ENCODE measurements at regions of chr12 and their contacts with region 1.

Region 1: GRCh38 chr12:49515266-49515665 is 23.6 kb upstream of the KCNH3 start:
- DNase-seq: no peak
- ATAC-seq: no peak
- H3K4me3 ChIP-seq: no peak overlapping the region
- H3K4me3 Mint-ChIP-seq: no peak overlapping the region
- H3K27ac ChIP-seq: no peak overlapping the region
- H3K27ac Mint-ChIP-seq: no peak overlapping the region
- H3K4me1 ChIP-seq: no peaks in the 10 kb centered on the region
- H3K4me1 Mint-ChIP-seq: no peaks in the 10 kb centered on the region
- H3K27me3 ChIP-seq: no peaks in the 10 kb centered on the region
- H3K27me3 Mint-ChIP-seq: no peaks in the 10 kb centered on the region
- CTCF ChIP-seq: no peak

Region 2: DNA sequence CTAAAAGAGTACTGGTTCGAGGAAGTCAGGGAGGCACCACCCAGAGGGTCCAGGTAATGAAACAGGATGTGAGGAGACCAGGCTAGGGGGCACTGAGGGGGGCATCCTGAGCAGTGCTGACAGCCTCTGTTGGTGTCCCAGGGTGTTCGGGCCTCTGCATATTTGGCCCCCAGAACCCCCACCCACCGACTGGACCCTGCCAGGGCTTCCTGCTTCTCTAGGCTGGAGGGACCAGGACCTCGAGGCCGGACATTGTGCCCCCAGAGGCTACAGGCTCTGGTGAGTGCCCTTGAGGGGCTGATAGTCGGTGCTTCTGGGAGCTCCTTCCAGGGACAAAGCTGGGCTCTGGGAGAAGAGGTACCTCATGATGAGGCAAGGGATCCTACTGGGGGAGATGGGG is 189.7 kb before region 1 on chr12:
- CTCF ChIA-PET with region 1: no interaction called
- POLR2A ChIA-PET with region 1: no interaction called
- intact Hi-C with region 1: no loop called
- DNase-seq: no peak
- ATAC-seq: no peak
- H3K4me3 ChIP-seq: no peak overlapping the region
- H3K4me3 Mint-ChIP-seq: no peak overlapping the region
- H3K27ac ChIP-seq: no peak overlapping the region
- H3K27ac Mint-ChIP-seq: no peak overlapping the region
- H3K4me1 ChIP-seq: peaks cover 12% of the 10 kb centered on the region
- H3K4me1 Mint-ChIP-seq: peaks cover 20% of the 10 kb centered on the region
- H3K27me3 ChIP-seq: no peaks in the 10 kb centered on the region
- H3K27me3 Mint-ChIP-seq: no peaks in the 10 kb centered on the region
- CTCF ChIP-seq: no peak

Region 3: DNA sequence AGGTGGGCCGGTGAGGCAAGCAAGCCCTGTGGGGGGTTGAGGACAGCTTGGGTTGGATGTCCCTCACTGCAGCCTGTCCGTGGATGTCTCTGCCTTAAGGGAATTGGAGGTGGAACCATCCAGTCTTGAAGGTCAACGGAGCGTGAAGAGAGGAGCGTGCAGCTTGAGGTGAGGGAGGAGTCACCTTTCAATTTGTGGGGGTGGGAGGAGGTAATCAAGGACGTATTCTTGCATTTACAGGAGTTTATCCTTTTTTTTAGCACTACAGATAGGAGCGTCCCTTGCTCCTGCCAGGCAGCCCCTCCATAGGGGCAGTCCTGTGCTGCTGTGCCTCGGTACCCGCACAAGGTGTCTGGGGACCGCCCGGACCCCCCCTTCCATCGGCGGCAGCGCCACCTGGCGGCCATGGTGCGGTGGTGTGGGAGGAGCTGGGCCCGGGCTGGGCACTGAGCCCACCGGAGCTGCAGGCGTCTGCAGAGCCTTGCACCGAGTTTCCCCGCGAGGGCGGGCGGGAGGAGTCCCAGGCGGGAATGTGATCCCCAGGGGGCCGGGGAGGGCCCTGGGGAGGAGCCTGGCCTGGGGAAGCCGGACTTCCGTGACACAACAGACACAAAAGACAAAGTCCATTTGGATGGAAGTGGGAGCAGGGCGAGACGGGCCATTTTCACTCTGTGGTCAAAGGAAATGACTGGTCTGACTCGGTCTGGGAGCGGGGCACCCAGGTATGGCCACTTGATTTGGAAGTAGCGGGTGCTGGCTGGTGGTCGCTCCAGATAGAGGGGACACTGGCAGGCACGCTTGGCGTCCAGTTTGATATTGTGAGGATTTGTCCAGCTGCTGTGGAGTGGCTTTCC is 167.7 kb before region 1 on chr12:
- CTCF ChIA-PET with region 1: interaction called, 380 read pairs
- POLR2A ChIA-PET with region 1: no interaction called
- intact Hi-C with region 1: no loop called
- DNase-seq: peak; percentile 68 to 91 (median 81)
- ATAC-seq: peak; percentile 78
- H3K4me3 ChIP-seq: peak overlapping the region; percentile 47 to 54
- H3K4me3 Mint-ChIP-seq: peak overlapping the region; percentile 79
- H3K27ac ChIP-seq: no peak overlapping the region
- H3K27ac Mint-ChIP-seq: no peak overlapping the region
- H3K4me1 ChIP-seq: peaks cover 45% of the 10 kb centered on the region
- H3K4me1 Mint-ChIP-seq: peaks cover 40% of the 10 kb centered on the region
- H3K27me3 ChIP-seq: peaks cover 33 to 45% of the 10 kb centered on the region in 2 experiments
- H3K27me3 Mint-ChIP-seq: peaks cover 57% of the 10 kb centered on the region
- CTCF ChIP-seq: peak; percentile 97

Region 4: DNA sequence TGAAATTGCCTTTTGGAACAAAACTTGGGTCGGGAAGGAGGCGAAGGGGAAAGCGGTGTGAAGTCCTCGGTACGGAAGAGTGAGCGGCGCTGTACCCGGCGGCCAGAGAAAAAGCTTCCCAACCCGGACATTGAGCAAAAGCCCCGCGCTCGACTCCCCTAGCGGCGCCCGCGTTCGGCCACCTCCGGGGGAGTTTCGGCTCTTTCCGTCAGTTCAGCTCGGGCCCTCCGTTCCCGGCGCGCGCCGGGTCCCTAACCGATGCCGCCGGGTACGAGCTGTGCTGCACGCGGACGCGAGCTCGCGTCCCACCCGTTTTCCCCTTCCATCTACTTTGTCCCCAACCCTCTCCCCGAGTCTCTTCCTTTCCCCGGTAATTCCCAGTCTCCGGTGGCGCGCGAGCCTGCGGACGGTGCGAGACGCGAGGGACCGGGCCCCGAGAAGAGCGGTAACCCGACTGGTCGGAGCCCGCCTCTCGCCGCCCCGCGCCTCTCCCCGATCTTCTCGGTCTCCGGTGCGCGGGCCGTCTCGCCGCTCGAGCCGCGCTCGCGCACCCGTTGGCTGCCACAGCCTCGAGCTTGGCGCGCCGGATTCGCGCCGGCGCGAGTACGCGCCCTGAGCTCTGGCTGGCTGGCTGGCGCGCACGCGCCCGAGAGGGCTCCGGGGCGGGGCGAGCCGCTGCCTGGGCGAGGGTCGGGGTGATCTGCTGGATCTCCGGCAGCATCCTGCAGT is 148.4 kb before region 1 on chr12:
- CTCF ChIA-PET with region 1: interaction called, 380 read pairs
- POLR2A ChIA-PET with region 1: no interaction called
- intact Hi-C with region 1: no loop called
- DNase-seq: peak; percentile 74 to 91 (median 84)
- ATAC-seq: peak; percentile 83
- H3K4me3 ChIP-seq: peak overlapping the region; percentile 91 to 100
- H3K4me3 Mint-ChIP-seq: peak overlapping the region; percentile 96
- H3K27ac ChIP-seq: peak overlapping the region; percentile 79 to 85
- H3K27ac Mint-ChIP-seq: peak overlapping the region; percentile 91
- H3K4me1 ChIP-seq: peaks cover 16% of the 10 kb centered on the region
- H3K4me1 Mint-ChIP-seq: peaks cover 31% of the 10 kb centered on the region
- H3K27me3 ChIP-seq: no peaks in the 10 kb centered on the region
- H3K27me3 Mint-ChIP-seq: no peaks in the 10 kb centered on the region
- CTCF ChIP-seq: no peak

Region 5: DNA sequence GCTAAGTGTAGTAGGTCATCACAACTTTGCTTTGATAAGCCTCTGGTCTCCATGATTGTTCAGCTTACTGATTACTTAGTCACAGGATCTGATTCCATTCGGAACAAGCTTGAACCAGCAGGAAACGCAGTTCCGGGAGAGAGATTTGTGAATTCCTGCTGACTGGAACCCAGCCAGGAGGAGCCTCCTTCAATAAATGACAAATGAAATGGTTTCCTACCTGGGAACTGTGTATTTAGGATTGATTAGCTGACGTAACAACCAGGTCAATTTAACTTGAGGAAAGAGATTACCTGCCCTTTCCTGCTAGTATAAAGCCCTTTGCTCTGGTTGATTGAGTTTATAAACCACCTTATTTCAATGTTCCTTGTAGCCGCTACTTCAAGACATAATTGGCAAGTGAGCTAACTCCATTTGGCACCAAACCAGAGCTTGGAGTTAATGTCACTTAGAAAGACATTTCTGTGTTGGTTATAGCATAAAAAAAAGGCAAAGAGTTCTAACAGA is 11.5 kb before region 1 on chr12:
- CTCF ChIA-PET with region 1: interaction called, 16 read pairs
- POLR2A ChIA-PET with region 1: no interaction called
- intact Hi-C with region 1: no loop called
- DNase-seq: no peak
- ATAC-seq: no peak
- H3K4me3 ChIP-seq: no peak overlapping the region
- H3K4me3 Mint-ChIP-seq: no peak overlapping the region
- H3K27ac ChIP-seq: no peak overlapping the region
- H3K27ac Mint-ChIP-seq: no peak overlapping the region
- H3K4me1 ChIP-seq: peaks cover 8% of the 10 kb centered on the region
- H3K4me1 Mint-ChIP-seq: peaks cover 17% of the 10 kb centered on the region
- H3K27me3 ChIP-seq: no peaks in the 10 kb centered on the region
- H3K27me3 Mint-ChIP-seq: no peaks in the 10 kb centered on the region
- CTCF ChIP-seq: no peak

Region 6: GRCh38 chr12:49553512-49554088 is 38.3 kb after region 1 on chr12:
- CTCF ChIA-PET with region 1: interaction called, 19 read pairs
- POLR2A ChIA-PET with region 1: no interaction called
- intact Hi-C with region 1: no loop called
- DNase-seq: peak in 2 of 9 experiments; percentile 60 to 70
- ATAC-seq: peak; percentile 68
- H3K4me3 ChIP-seq: no peak overlapping the region
- H3K4me3 Mint-ChIP-seq: no peak overlapping the region
- H3K27ac ChIP-seq: no peak overlapping the region
- H3K27ac Mint-ChIP-seq: peak overlapping the region; percentile 7
- H3K4me1 ChIP-seq: peaks cover 10% of the 10 kb centered on the region
- H3K4me1 Mint-ChIP-seq: peaks cover 23% of the 10 kb centered on the region
- H3K27me3 ChIP-seq: peaks cover 0 to 4% of the 10 kb centered on the region in 2 experiments
- H3K27me3 Mint-ChIP-seq: no peaks in the 10 kb centered on the region
- CTCF ChIP-seq: peak; percentile 53

Region 7: GRCh38 chr12:49580572-49581535 is 65.6 kb after region 1 on chr12:
- CTCF ChIA-PET with region 1: interaction called, 17 read pairs
- POLR2A ChIA-PET with region 1: no interaction called
- intact Hi-C with region 1: no loop called
- DNase-seq: peak in 8 of 9 experiments; percentile 43 to 69 (median 61)
- ATAC-seq: peak; percentile 86
- H3K4me3 ChIP-seq: no peak overlapping the region
- H3K4me3 Mint-ChIP-seq: no peak overlapping the region
- H3K27ac ChIP-seq: no peak overlapping the region
- H3K27ac Mint-ChIP-seq: no peak overlapping the region
- H3K4me1 ChIP-seq: no peaks in the 10 kb centered on the region
- H3K4me1 Mint-ChIP-seq: peaks cover 11% of the 10 kb centered on the region
- H3K27me3 ChIP-seq: no peaks in the 10 kb centered on the region
- H3K27me3 Mint-ChIP-seq: no peaks in the 10 kb centered on the region
- CTCF ChIP-seq: peak; percentile 69